Motor neuron (in vitro differentiated cells): ENCODE measurements at regions of chr13 and their contacts with region 1.

Region 1: GRCh38 chr13:45047394-45048310 is 58.3 kb downstream of the GPALPP1 start:
- ATAC-seq: peak; percentile 84 to 99 (median 92)
- H3K4me3 ChIP-seq: peak overlapping the region; percentile 17 to 26 (median 21)
- H3K27ac ChIP-seq: no peak overlapping the region
- H3K4me1 ChIP-seq: peaks cover 13 to 15% of the 10 kb centered on the region in 2 donors

Region 2: DNA sequence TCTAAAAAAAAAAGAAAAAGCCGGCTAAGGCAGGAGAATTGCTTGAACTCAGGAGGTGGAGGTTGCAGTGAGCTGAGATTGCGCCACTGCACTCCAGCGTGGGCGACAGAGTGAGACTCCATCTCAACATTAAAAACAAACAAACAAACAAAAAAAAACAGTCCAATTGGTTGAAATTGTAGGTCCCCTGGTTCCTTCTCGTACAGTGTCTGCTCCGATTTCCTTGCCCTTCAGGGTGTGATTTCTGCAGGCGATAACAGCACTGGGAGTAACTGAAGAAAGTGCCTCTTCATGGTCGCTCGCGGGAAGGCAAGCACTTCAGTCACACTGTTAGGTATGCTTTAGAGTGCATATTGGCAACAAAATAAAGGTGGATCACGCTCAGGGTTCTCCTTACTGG is 253.6 kb after region 1 on chr13:
- in situ Hi-C with region 1: loop called (anchors 10 to 25 kb)
- ATAC-seq: no peak
- H3K4me3 ChIP-seq: no peak overlapping the region
- H3K27ac ChIP-seq: no peak overlapping the region
- H3K4me1 ChIP-seq: peaks cover 4 to 6% of the 10 kb centered on the region in 2 donors

Region 3: GRCh38 chr13:45310341-45311125 is 262.9 kb after region 1 on chr13:
- in situ Hi-C with region 1: loop called (anchors 10 to 25 kb)
- ATAC-seq: no peak
- H3K4me3 ChIP-seq: peak overlapping the region in 3 of 5 donors; percentile 27 to 30 (median 28)
- H3K27ac ChIP-seq: no peak overlapping the region
- H3K4me1 ChIP-seq: peaks cover 4 to 5% of the 10 kb centered on the region in 2 donors